H1 (cell line): ENCODE measurements at regions of chr14 and their contacts with region 1.

Region 1: GRCh38 chr14:95774265-95775160 is 60.6 kb upstream of the TCL1A start:
- DNase-seq: peak in 1 of 2 experiments; percentile 87
- H3K4me3 ChIP-seq: no peak overlapping the region
- H3K27ac ChIP-seq: no peak overlapping the region
- H3K4me1 ChIP-seq: peaks cover 0 to 4% (median 0%) of the 10 kb centered on the region in 4 experiments; a peak in 2 of 7 replicates
- H3K27me3 ChIP-seq: peaks cover 0 to 19% (median 9%) of the 10 kb centered on the region in 4 experiments; a peak in 4 of 7 replicates
- CTCF ChIP-seq: peak; percentile 49 to 92 (median 69)
- EP300 ChIP-seq: no peak
- POLR2A ChIP-seq: no peak
- RAD21 ChIP-seq: peak; percentile 75 to 83

Region 2: GRCh38 chr14:95483309-95484165 is 291.0 kb before region 1 on chr14:
- CTCF ChIA-PET with region 1: no interaction called
- POLR2A ChIA-PET with region 1: no interaction called
- DNase-seq: no peak
- H3K4me3 ChIP-seq: no peak overlapping the region
- H3K27ac ChIP-seq: no peak overlapping the region
- H3K4me1 ChIP-seq: peaks cover 0 to 13% (median 5%) of the 10 kb centered on the region in 4 experiments; a peak in 6 of 7 replicates
- H3K27me3 ChIP-seq: no peaks in the 10 kb centered on the region
- CTCF ChIP-seq: no peak
- EP300 ChIP-seq: no peak
- POLR2A ChIP-seq: no peak
- RAD21 ChIP-seq: no peak

Region 3: DNA sequence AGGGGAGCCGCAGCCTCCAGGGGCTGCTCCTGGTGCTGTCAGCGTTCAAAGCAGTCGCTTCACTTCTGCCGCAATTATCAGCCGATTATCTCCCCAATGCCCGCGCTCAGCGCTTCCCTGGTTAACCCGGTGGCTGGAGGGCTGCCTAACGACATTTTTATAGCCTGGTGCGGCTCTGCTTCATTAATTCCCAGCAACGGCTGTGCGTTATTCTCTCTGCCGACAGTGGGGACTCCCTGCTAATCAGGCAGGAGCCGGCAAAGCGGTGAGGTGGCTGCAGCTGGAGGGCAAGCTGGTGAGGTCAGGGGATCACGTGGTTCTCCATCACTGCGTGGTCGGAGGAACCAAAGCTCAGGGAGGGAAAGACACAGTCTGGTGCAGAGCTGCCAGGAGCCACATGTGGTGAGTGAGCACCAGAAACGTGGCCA is 176.7 kb before region 1 on chr14:
- CTCF ChIA-PET with region 1: interaction called, 10 read pairs
- POLR2A ChIA-PET with region 1: no interaction called
- DNase-seq: peak; percentile 38 to 62
- H3K4me3 ChIP-seq: peak overlapping the region; percentile 6 to 47 (median 15); a peak in 5 of 8 replicates
- H3K27ac ChIP-seq: peak overlapping the region; percentile 77; the same call in 1 of the 2 replicates
- H3K4me1 ChIP-seq: peaks cover 0 to 15% (median 9%) of the 10 kb centered on the region in 4 experiments; a peak in 6 of 7 replicates
- H3K27me3 ChIP-seq: peaks cover 0 to 4% (median under 1%) of the 10 kb centered on the region in 4 experiments; a peak in 1 of 7 replicates
- CTCF ChIP-seq: no peak
- EP300 ChIP-seq: no peak
- POLR2A ChIP-seq: no peak; a peak in 1 of 3 replicates
- RAD21 ChIP-seq: peak in 1 of 2 experiments; percentile 6; a peak in 1 of 4 replicates

Region 4: GRCh38 chr14:95664546-95664945 is 110.0 kb before region 1 on chr14:
- CTCF ChIA-PET with region 1: interaction called, 11 read pairs
- POLR2A ChIA-PET with region 1: no interaction called
- DNase-seq: no peak
- H3K4me3 ChIP-seq: no peak overlapping the region
- H3K27ac ChIP-seq: no peak overlapping the region
- H3K4me1 ChIP-seq: peaks cover 0 to 8% (median 6%) of the 10 kb centered on the region in 4 experiments; a peak in 6 of 7 replicates
- H3K27me3 ChIP-seq: peaks cover 0 to 3% (median 1%) of the 10 kb centered on the region in 4 experiments; a peak in 5 of 7 replicates
- CTCF ChIP-seq: no peak
- EP300 ChIP-seq: no peak
- POLR2A ChIP-seq: no peak
- RAD21 ChIP-seq: no peak

Region 5: GRCh38 chr14:95759941-95760340 is 14.6 kb before region 1 on chr14:
- CTCF ChIA-PET with region 1: interaction called, 67 read pairs
- POLR2A ChIA-PET with region 1: no interaction called
- DNase-seq: no peak
- H3K4me3 ChIP-seq: no peak overlapping the region
- H3K27ac ChIP-seq: no peak overlapping the region
- H3K4me1 ChIP-seq: peaks cover 0 to 4% (median 0%) of the 10 kb centered on the region in 4 experiments; a peak in 3 of 7 replicates
- H3K27me3 ChIP-seq: no peaks in the 10 kb centered on the region; a peak in 1 of 7 replicates
- CTCF ChIP-seq: no peak
- EP300 ChIP-seq: no peak
- POLR2A ChIP-seq: no peak
- RAD21 ChIP-seq: no peak

Region 6: DNA sequence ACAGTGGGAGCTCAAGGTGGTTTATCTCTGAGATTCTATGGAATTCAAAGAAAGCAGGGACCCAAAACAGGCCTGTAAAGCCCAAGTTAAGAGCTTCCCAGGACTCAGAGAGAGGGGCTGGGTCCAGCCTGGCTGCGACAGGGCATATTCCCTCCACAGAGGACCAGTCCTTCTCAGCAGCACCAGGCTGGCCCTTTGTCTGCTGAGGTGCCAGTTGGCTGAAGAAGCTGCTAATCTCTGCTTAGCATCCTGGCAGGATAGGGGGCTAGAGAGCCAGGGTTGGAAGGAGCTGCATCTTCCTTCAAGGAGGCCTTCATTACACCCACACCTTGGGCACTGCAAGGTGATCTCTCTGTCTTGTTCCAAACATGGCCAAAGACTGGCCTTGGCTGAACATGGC is 33.9 kb after region 1 on chr14:
- CTCF ChIA-PET with region 1: interaction called, 19 read pairs
- POLR2A ChIA-PET with region 1: no interaction called
- DNase-seq: peak in 1 of 2 experiments; percentile 2
- H3K4me3 ChIP-seq: no peak overlapping the region
- H3K27ac ChIP-seq: no peak overlapping the region
- H3K4me1 ChIP-seq: no peaks in the 10 kb centered on the region
- H3K27me3 ChIP-seq: no peaks in the 10 kb centered on the region; a peak in 2 of 7 replicates
- CTCF ChIP-seq: no peak
- EP300 ChIP-seq: no peak
- POLR2A ChIP-seq: no peak
- RAD21 ChIP-seq: no peak

Region 7: GRCh38 chr14:95871300-95871900 is 96.9 kb after region 1 on chr14:
- CTCF ChIA-PET with region 1: interaction called, 11 read pairs
- POLR2A ChIA-PET with region 1: no interaction called
- DNase-seq: no peak
- H3K4me3 ChIP-seq: no peak overlapping the region
- H3K27ac ChIP-seq: no peak overlapping the region
- H3K4me1 ChIP-seq: peaks cover 0 to 10% (median 5%) of the 10 kb centered on the region in 4 experiments; a peak in 3 of 7 replicates
- H3K27me3 ChIP-seq: peaks cover 0 to 7% (median 5%) of the 10 kb centered on the region in 4 experiments; a peak in 5 of 7 replicates
- CTCF ChIP-seq: no peak
- EP300 ChIP-seq: no peak
- POLR2A ChIP-seq: no peak
- RAD21 ChIP-seq: no peak